CD8-positive, alpha-beta T cell (primary cell): ENCODE measurements at regions of chr15 and their contacts with region 1.

Region 1: DNA sequence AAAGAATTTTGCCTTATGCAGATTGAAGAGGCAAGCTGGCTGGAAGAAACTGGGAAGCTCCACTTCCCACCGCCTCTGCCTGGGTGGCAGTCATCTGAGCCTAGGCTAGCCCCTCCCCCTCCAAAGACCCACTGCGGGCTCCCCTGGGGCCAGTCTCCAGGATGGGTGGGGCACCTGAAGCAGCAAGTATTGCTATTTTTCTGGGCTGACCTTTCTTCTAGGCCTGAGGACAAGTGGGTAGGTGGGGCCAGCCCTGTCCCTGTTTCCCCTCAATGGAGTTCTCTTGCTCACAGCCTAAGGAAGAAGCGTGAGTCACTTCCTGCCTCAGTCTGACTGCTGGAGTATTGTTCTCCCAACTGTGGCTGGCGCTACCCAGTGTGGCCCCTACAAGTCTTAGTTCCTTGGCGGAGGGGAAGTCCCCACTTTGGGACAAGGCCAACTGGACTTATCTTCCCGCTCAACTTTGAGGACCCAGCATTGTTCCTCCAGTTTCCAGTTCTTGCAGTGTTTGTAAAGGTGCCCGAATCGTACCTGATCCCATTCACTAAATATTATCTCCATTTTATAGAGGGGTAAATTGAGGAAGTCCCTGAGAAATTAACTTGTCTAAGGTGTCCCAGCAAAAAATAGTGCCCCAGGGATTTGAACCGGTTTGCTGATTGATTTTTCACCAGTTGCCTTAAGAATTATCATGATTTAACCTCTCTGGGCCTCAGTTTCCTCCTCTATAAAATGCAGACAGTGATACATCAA is 1.4 kb downstream of the FURIN start:
- DNase-seq: peak in 4 of 9 experiments; percentile 33 to 64 (median 51)
- ATAC-seq: peak; percentile 22
- H3K4me3 ChIP-seq: no peak overlapping the region
- H3K4me3 Mint-ChIP-seq: peak overlapping the region; percentile 88
- H3K27ac ChIP-seq: peak overlapping the region in 1 of 2 experiments; percentile 8
- H3K27ac Mint-ChIP-seq: peak overlapping the region; percentile 95
- H3K4me1 ChIP-seq: peaks cover 39% of the 10 kb centered on the region
- H3K4me1 Mint-ChIP-seq: peaks cover 34% of the 10 kb centered on the region
- H3K27me3 ChIP-seq: no peaks in the 10 kb centered on the region
- H3K27me3 Mint-ChIP-seq: no peaks in the 10 kb centered on the region
- CTCF ChIP-seq: no peak

Region 2: GRCh38 chr15:90648137-90649070 is 221.4 kb before region 1 on chr15:
- CTCF ChIA-PET with region 1: interaction called, 4 read pairs
- POLR2A ChIA-PET with region 1: no interaction called
- intact Hi-C with region 1: loop called in 1 of 2 experiments (anchors 5 kb)
- DNase-seq: peak in 8 of 9 experiments; percentile 33 to 81 (median 62)
- ATAC-seq: peak; percentile 89
- H3K4me3 ChIP-seq: no peak overlapping the region
- H3K4me3 Mint-ChIP-seq: peak overlapping the region; percentile 12
- H3K27ac ChIP-seq: no peak overlapping the region
- H3K27ac Mint-ChIP-seq: no peak overlapping the region
- H3K4me1 ChIP-seq: peaks cover 24% of the 10 kb centered on the region
- H3K4me1 Mint-ChIP-seq: peaks cover 20% of the 10 kb centered on the region
- H3K27me3 ChIP-seq: no peaks in the 10 kb centered on the region
- H3K27me3 Mint-ChIP-seq: no peaks in the 10 kb centered on the region
- CTCF ChIP-seq: peak; percentile 94

Region 3: GRCh38 chr15:90818251-90819210 is 51.2 kb before region 1 on chr15:
- CTCF ChIA-PET with region 1: no interaction called
- POLR2A ChIA-PET with region 1: interaction called, 4 read pairs
- intact Hi-C with region 1: loop called (anchors 5 kb)
- DNase-seq: peak in 5 of 9 experiments; percentile 27 to 60 (median 41)
- ATAC-seq: peak; percentile 64
- H3K4me3 ChIP-seq: no peak overlapping the region
- H3K4me3 Mint-ChIP-seq: peak overlapping the region; percentile 37
- H3K27ac ChIP-seq: no peak overlapping the region
- H3K27ac Mint-ChIP-seq: no peak overlapping the region
- H3K4me1 ChIP-seq: peaks cover 21% of the 10 kb centered on the region
- H3K4me1 Mint-ChIP-seq: peaks cover 36% of the 10 kb centered on the region
- H3K27me3 ChIP-seq: no peaks in the 10 kb centered on the region
- H3K27me3 Mint-ChIP-seq: no peaks in the 10 kb centered on the region
- CTCF ChIP-seq: peak; percentile 41

Region 4: DNA sequence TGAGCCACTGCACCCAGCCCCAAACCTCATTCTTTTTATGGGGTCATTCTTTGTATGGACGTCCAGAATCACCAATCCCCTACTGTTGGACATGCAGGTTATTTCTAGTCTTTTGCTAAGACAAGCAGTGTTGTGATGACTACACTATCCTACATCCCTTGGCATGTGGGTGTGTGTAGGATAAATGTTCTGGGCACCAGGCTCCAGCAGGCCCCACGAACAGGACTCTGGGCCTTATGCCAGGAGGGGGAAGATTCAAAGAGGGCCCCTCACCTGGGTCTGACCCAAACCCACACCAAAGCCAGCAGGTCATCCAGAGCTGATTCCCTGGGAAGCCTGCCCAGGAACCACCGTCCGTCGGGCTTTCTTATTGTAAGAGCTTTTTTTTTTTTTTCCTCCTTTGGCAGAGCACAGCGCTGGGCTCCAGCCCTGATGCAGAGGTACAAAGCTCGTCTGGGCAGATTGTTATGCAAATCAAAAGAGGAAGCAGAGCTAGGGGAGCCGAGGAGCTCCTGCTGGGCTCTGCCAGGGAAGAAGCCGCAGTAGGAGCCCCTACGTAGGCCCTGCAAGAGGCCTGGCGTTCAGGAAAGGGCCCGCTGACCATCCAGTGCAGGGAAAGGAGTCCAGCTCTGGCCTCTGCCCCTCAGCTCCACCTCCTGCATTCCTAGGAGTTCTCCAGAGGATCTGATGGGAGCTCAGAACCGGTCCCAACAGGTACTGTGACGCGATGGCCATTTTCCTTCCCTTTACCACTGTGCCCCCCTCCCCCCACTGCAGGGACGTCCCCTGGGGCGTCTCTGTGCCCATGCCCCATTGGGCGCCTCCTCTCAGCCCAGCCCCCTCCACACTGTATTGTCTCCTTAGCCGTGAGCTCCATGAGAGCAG is 30.3 kb before region 1 on chr15:
- CTCF ChIA-PET with region 1: no interaction called
- POLR2A ChIA-PET with region 1: interaction called, 4 read pairs
- intact Hi-C with region 1: loop called (anchors 1 kb)
- DNase-seq: peak in 1 of 9 experiments; percentile 44
- ATAC-seq: no peak
- H3K4me3 ChIP-seq: peak overlapping the region in 1 of 2 experiments; percentile 14
- H3K4me3 Mint-ChIP-seq: peak overlapping the region; percentile 43
- H3K27ac ChIP-seq: no peak overlapping the region
- H3K27ac Mint-ChIP-seq: peak overlapping the region; percentile 77
- H3K4me1 ChIP-seq: peaks cover 39% of the 10 kb centered on the region
- H3K4me1 Mint-ChIP-seq: peaks cover 30% of the 10 kb centered on the region
- H3K27me3 ChIP-seq: no peaks in the 10 kb centered on the region
- H3K27me3 Mint-ChIP-seq: no peaks in the 10 kb centered on the region
- CTCF ChIP-seq: no peak

Region 5: GRCh38 chr15:90859234-90860131 is 10.3 kb before region 1 on chr15:
- CTCF ChIA-PET with region 1: no interaction called
- POLR2A ChIA-PET with region 1: interaction called, 3 read pairs
- intact Hi-C with region 1: loop called in 1 of 2 experiments (anchors 2 kb)
- DNase-seq: no peak
- ATAC-seq: no peak
- H3K4me3 ChIP-seq: no peak overlapping the region
- H3K4me3 Mint-ChIP-seq: no peak overlapping the region
- H3K27ac ChIP-seq: no peak overlapping the region
- H3K27ac Mint-ChIP-seq: no peak overlapping the region
- H3K4me1 ChIP-seq: peaks cover 24% of the 10 kb centered on the region
- H3K4me1 Mint-ChIP-seq: peaks cover 32% of the 10 kb centered on the region
- H3K27me3 ChIP-seq: no peaks in the 10 kb centered on the region
- H3K27me3 Mint-ChIP-seq: no peaks in the 10 kb centered on the region
- CTCF ChIP-seq: no peak

Region 6: DNA sequence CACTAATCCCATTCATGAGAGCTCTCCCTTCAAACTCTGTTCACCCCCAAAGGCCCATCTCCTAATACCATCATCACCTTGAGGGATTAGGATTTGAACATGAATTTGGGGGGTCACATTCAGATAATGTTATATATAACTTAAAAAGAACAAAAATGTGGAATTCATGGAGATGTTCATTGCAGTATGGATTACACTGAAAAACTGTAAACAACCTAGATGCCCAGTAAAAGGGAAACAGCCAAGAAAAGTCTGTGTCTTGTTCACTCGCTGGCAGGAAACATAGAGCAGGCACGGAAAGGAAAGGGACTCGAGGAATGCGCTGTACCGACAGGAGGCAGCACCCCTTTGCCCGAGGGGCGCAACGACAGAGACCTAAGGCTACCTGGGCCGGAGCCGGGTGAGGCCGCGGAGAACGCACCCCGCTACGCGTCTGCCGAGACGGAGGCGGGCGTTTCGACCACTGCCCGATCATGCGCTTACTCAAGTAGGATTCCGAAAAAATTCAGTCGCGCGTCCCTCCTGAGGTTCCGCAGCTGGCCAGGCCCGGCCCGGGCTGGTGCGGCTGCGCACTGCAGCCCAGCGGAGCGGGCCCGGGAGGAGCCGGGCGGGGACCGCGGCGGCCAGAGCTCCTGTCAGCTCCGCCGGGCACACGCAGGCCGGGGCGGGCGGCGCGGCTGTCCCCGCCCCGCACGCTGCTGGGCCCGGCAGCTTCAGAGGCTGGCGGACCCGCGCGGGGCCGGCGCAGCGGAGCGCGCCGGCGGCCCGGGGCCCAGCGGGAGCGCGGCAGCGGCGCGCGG is 32.5 kb after region 1 on chr15:
- CTCF ChIA-PET with region 1: interaction called, 6 read pairs
- POLR2A ChIA-PET with region 1: interaction called, 3 read pairs
- intact Hi-C with region 1: loop called in 1 of 2 experiments (anchors 2 kb)
- DNase-seq: peak; percentile 42 to 88 (median 70)
- ATAC-seq: peak; percentile 69
- H3K4me3 ChIP-seq: peak overlapping the region; percentile 65 to 89
- H3K4me3 Mint-ChIP-seq: peak overlapping the region; percentile 92
- H3K27ac ChIP-seq: peak overlapping the region; percentile 65 to 73
- H3K27ac Mint-ChIP-seq: peak overlapping the region; percentile 93
- H3K4me1 ChIP-seq: peaks cover 15% of the 10 kb centered on the region
- H3K4me1 Mint-ChIP-seq: peaks cover 28% of the 10 kb centered on the region
- H3K27me3 ChIP-seq: no peaks in the 10 kb centered on the region
- H3K27me3 Mint-ChIP-seq: no peaks in the 10 kb centered on the region
- CTCF ChIP-seq: peak; percentile 84